Left ventricle myocardium superior (tissue), 1 donor: ENCODE measurements at regions of chr4 and their contacts with region 1.

Region 1: DNA sequence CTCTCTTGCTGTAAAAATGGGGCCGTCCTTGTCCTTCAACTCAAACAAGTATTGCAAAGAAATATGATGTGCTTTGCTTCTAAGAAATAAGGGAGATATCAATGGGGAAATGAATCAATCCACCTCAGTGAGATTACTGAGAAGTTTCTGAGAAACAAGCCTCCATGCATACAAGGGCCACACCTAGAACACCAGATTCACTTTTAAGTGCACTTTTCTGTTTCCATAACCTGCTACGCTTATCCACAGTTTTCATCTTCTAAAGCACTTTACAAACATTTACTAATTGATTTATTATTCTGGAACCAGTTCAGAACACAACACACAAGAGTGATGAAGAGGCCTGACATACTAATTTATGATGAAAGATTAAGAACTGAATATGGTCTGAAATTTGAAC is 54.0 kb upstream of the BOD1L1 start:
- DNase-seq: no peak
- ATAC-seq: no peak

Region 2: DNA sequence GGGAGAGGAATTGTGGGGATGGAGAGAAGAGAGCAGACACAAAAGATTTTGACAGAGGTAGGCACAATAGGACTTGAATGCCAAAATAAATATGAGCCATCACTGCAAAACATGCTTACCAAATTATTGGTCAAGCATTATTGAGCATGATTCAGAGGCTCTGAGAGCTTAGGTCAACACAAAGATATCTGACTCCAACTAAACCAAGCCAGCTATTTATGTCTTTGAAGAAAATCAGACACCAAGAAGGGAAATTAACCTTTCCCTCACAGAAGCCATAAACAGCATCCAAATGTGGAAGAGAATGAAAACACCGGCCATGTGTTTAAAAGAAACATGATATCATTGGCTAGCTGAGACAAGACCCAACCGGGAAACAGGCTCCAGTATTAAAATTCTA is 520.6 kb before region 1 on chr4:
- intact Hi-C with region 1: no loop called
- DNase-seq: no peak
- ATAC-seq: peak; percentile 35

Region 3: DNA sequence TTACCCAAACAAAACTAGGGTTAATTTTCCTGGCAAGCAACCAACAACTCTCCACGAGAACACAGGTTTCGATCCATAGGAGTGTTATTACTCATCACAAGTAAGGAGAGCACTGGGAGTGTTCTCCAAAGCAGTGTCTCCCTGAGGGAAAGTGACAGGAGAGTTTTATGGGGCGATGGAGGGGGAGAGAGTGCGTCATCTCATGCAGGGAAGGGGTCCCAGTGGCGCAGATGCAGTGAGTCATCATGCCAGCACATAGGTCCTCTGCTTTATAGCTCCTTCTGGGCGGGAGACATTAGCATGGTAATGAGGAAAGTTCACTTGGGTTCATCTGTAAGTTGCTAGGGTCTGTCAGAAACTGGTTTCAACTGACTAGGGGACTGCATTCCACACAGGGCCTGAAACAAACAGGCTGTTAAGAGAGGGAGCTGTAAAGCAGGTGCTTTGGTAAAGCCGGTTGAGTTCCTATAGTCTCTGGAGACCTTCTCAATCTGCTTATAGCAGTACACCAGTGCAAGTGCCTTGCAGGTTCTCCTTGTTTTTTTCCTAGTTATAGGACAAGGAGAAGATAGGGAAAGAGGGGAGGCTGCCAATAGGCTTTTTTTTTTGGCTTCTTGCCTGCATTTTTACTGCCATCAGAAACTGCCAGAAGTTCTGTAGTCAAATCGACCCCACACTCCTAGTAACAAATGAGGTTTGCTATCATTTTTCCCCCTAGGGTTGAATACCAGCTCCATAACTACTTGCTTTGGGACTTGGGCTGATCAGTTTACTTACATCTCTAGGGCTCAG is 41.2 kb before region 1 on chr4:
- intact Hi-C with region 1: no loop called
- DNase-seq: no peak
- ATAC-seq: no peak

Region 4: DNA sequence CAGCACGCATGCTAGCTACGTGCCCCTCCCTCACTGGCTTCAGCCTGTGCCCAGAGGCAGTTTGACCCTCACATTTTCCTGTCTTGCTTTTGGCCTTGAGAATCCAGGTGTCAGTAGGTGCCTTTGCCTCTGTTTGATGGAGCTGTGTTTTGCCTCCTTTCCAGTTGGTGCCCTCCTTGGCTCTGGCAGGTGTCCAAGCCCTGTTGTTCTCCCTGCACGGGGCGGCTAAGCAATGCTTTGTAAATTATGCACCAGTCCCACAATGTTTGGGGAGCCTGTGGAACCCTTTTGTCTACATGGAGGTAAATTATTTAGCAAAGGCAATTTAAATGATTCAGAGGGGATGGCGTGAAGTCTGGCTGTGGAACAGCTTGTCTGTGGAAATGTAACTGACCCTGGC is 148.9 kb after region 1 on chr4:
- intact Hi-C with region 1: loop called (anchors 10 kb)
- DNase-seq: peak; percentile 28
- ATAC-seq: no peak